ENCODE measurements at regions of chr15 and their contacts with region 1.

Region 1: DNA sequence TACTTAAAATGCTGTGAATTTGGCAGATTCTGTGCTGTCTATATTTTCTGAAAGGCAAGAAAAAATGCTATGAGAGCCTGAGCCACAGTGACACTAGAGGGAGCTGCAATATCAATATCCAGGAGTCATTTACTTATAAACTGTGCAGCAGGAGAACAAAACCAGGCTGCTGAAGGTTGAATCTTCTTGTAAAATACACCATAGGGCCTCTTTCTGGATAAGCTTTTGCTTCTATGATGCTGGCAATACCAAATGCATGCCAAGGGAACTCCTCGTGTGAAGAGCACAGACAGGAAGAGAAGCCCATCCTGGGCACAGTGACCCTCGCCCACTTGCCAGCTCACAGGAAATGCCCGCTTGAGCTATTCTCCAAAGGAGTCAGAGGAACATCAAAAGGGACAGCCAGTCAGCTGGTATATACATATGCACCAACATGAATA is 48.0 kb upstream of the TSPAN3 start:
- DNase-seq: peak; percentile 33 to 82 (median 43)
- H3K4me3 ChIP-seq: no peak overlapping the region
- H3K27ac ChIP-seq: no peak overlapping the region
- H3K4me1 ChIP-seq: peaks cover 0 to 17% of the 10 kb centered on the region in 2 donors
- H3K27me3 ChIP-seq: no peaks in the 10 kb centered on the region
- CTCF ChIP-seq: peak; percentile 45 to 79 (median 76)
- POLR2A ChIP-seq: no peak

Region 2: DNA sequence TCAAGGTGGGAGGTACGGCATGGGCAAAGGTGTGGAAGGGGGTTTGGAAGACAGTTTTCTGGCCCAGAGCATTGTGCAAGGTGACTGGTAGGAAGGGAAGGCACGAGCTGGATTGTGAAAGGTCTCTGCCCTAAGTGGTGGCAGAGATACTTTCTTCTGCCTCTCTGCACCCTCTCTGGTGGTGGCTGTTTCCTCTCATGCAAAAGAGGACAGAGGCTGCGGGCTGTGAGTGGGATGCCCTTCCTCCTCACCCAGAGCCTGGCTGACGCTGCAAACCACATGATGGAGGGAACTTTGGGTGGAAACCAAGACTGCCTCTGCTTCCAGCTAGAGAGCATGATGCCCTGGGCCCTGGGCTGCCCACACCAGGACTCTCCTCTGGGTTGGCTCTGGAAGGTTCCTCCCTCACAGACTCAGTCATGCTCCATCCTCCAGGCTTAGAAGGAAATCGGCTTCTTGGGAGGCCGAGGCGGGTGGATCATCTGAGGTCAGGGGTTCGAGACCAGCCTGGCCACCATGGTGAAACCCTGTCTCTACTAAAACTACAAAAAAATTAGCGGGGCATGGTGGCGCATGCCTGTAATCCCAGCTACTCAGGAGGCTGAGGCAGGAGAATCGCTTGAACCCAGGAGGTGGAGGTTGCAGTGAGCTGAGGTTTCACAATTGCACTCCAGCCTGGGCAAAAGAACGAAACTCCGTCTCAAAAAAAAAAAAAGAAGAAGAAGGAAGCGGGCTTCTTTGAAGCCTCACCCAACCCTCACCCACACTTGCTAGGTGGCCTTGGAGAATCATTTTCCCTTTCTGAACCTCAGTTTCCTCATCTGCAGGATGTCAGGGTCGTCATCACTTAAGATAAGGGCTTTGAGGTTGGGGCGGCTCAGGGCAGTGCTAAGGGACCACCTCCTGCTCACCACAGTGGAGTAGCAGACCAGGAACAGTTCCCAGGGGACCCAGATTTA is 115.7 kb before region 1 on chr15:
- intact Hi-C with region 1: no loop called
- DNase-seq: peak; percentile 40 to 72 (median 56)
- H3K4me3 ChIP-seq: no peak overlapping the region
- H3K27ac ChIP-seq: peak overlapping the region in 3 of 5 donors; percentile 13 to 83 (median 60)
- H3K4me1 ChIP-seq: no peaks in the 10 kb centered on the region
- H3K27me3 ChIP-seq: no peaks in the 10 kb centered on the region
- CTCF ChIP-seq: no peak
- POLR2A ChIP-seq: no peak

Region 3: DNA sequence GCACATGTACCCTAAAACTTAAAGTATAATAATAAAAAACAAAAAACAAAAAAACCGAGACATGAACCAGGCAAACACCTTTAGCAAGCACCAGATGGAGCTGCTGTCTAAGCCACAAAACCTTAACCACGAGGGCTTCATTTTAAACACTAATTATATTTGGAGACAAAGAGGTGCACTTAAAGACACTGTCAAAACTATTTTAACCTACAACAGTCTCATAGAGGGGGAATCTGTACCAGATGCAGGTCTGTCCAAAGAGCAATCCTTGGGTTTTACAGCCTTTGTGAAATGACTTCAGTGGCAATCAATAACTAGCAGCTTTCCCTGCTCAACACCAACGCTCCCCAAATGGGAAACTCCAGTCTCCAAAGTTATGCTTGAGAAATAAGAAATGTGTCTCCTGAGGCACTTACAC is 67.7 kb after region 1 on chr15:
- intact Hi-C with region 1: no loop called
- DNase-seq: peak in 1 of 7 donors; percentile 5
- H3K4me3 ChIP-seq: no peak overlapping the region
- H3K27ac ChIP-seq: peak overlapping the region in 2 of 5 donors; percentile 63 to 84
- H3K4me1 ChIP-seq: peaks cover 0 to 19% of the 10 kb centered on the region in 2 donors
- H3K27me3 ChIP-seq: no peaks in the 10 kb centered on the region
- CTCF ChIP-seq: peak; percentile 20 to 83 (median 58)
- POLR2A ChIP-seq: no peak

Region 4: GRCh38 chr15:77475898-77476297 is 357.0 kb after region 1 on chr15:
- intact Hi-C with region 1: no loop called
- DNase-seq: no peak
- H3K4me3 ChIP-seq: no peak overlapping the region
- H3K27ac ChIP-seq: no peak overlapping the region
- H3K4me1 ChIP-seq: peaks cover 0 to 2% of the 10 kb centered on the region in 2 donors
- H3K27me3 ChIP-seq: no peaks in the 10 kb centered on the region
- CTCF ChIP-seq: no peak
- POLR2A ChIP-seq: no peak

Region 5: GRCh38 chr15:77504306-77504705 is 385.4 kb after region 1 on chr15:
- intact Hi-C with region 1: loop called (anchors 5 to 10 kb)
- DNase-seq: no peak
- H3K4me3 ChIP-seq: no peak overlapping the region
- H3K27ac ChIP-seq: no peak overlapping the region
- H3K4me1 ChIP-seq: peaks cover 14 to 31% of the 10 kb centered on the region in 2 donors
- H3K27me3 ChIP-seq: no peaks in the 10 kb centered on the region
- CTCF ChIP-seq: no peak
- POLR2A ChIP-seq: no peak

Region 6: GRCh38 chr15:77538027-77538451 is 419.1 kb after region 1 on chr15:
- intact Hi-C with region 1: loop called (anchors 5 to 10 kb)
- DNase-seq: no peak
- H3K4me3 ChIP-seq: no peak overlapping the region
- H3K27ac ChIP-seq: no peak overlapping the region
- H3K4me1 ChIP-seq: peaks cover 3 to 4% of the 10 kb centered on the region in 2 donors
- H3K27me3 ChIP-seq: no peaks in the 10 kb centered on the region
- CTCF ChIP-seq: no peak
- POLR2A ChIP-seq: no peak